Endothelial cell of umbilical vein (primary cell): ENCODE measurements at regions of chr3 and their contacts with region 1.

Region 1: GRCh38 chr3:142578327-142579223 is at the start of gene ATR:
- DNase-seq: peak; percentile 96
- H3K4me3 ChIP-seq: peak within 1 kb of the TSS; percentile 69 to 82 (median 81)
- H3K27ac ChIP-seq: peak within 1 kb of the TSS; percentile 81
- H3K4me1 ChIP-seq: peaks cover 15% of the 10 kb centered on the region
- H3K27me3 ChIP-seq: peaks cover 12 to 14% of the 10 kb centered on the region in 2 experiments
- CTCF ChIP-seq: no peak
- POLR2A ChIP-seq: peak; percentile 89
- total RNA-seq, gene ATR: 21.1 and 23.6 TPM in 2 replicates

Region 2: GRCh38 chr3:142337994-142338393 is 240.6 kb before region 1 on chr3:
- CTCF ChIA-PET with region 1: no interaction called
- POLR2A ChIA-PET with region 1: no interaction called
- dilution Hi-C with region 1: no loop called
- intact Hi-C with region 1: no loop called
- DNase-seq: no peak
- H3K4me3 ChIP-seq: no peak overlapping the region
- H3K27ac ChIP-seq: no peak overlapping the region
- H3K4me1 ChIP-seq: no peaks in the 10 kb centered on the region
- H3K27me3 ChIP-seq: no peaks in the 10 kb centered on the region
- CTCF ChIP-seq: no peak
- POLR2A ChIP-seq: no peak

Region 3: DNA sequence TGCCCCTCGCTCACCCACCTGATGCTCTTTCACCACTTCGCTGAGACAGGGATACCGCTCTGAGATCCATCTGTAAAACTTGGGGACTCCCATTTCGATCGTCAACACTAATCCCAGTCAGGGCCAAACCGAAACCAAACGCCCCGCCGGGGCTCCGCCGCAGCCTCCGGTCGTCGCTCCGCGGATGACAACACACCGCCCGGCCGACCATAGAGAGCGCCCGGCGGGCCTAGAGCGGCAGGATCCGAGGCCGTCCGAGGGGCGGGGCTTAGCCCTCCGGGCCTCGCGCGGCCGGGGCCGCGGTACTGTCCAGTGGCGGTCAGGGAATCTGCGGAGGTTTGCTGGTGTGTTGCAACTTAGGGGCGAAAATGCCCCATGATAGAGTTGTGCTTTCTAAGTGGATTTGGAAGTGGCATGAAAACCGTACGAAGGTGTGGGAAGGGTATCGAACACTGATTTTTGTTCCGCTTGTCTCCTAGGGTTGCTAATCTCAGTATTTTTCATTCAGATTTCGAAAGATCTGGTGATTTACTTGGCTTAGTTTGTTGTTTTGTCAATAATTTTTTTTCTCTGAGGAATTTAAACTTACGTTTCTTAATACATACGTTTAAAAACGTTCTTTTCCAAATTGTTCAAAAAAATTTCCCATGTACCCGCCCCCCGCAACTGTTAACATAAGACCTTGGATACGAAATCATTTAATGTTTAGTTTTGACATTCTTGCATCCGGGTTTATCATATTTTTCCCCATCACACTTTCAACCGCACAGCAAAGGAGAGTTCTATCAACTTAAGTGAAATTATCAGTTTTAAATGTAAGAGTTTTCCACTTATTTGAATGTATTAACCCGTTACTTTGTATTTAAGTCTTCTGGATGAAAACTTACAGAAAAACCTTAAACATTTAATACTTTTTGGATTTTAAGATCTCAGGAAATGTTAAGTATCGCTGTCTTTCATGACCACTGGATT is 130.4 kb before region 1 on chr3 and contains the start of gene XRN1:
- CTCF ChIA-PET with region 1: no interaction called
- POLR2A ChIA-PET with region 1: no interaction called
- dilution Hi-C with region 1: no loop called
- intact Hi-C with region 1: loop called (anchors 1 kb)
- DNase-seq: peak; percentile 93
- H3K4me3 ChIP-seq: peak within 1 kb of the TSS; percentile 44 to 98 (median 83)
- H3K27ac ChIP-seq: peak within 1 kb of the TSS; percentile 84
- H3K4me1 ChIP-seq: peaks cover 20% of the 10 kb centered on the region
- H3K27me3 ChIP-seq: no peaks in the 10 kb centered on the region
- CTCF ChIP-seq: no peak
- POLR2A ChIP-seq: peak; percentile 95
- total RNA-seq, gene XRN1: 34.4 and 40.0 TPM in 2 replicates

Region 4: GRCh38 chr3:142467768-142468167 is 110.8 kb before region 1 on chr3:
- CTCF ChIA-PET with region 1: no interaction called
- POLR2A ChIA-PET with region 1: no interaction called
- dilution Hi-C with region 1: no loop called
- intact Hi-C with region 1: no loop called
- DNase-seq: no peak
- H3K4me3 ChIP-seq: no peak overlapping the region
- H3K27ac ChIP-seq: no peak overlapping the region
- H3K4me1 ChIP-seq: no peaks in the 10 kb centered on the region
- H3K27me3 ChIP-seq: no peaks in the 10 kb centered on the region
- CTCF ChIP-seq: no peak
- POLR2A ChIP-seq: no peak

Region 5: DNA sequence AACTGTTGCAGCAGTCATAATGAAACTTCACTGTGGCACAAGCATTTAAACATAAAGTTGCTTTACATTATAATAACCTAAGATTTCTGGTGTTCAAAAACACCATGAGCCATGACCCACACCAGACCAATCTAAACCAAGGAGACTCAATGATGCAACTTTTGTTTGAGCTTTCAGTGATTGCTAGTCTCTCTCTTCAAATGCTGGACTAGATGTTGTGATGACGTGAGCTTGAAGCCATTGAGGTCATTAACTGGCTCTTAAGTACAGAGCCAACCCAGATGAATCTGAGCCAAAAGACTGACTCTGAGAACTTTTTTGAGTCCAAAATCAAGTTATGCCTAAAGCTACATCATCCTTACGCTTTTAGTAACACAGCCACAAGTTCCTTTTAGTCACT is 36.5 kb before region 1 on chr3:
- CTCF ChIA-PET with region 1: no interaction called
- POLR2A ChIA-PET with region 1: no interaction called
- dilution Hi-C with region 1: no loop called
- intact Hi-C with region 1: no loop called
- DNase-seq: no peak
- H3K4me3 ChIP-seq: no peak overlapping the region
- H3K27ac ChIP-seq: no peak overlapping the region
- H3K4me1 ChIP-seq: no peaks in the 10 kb centered on the region
- H3K27me3 ChIP-seq: no peaks in the 10 kb centered on the region
- CTCF ChIP-seq: no peak
- POLR2A ChIP-seq: no peak

Region 6: DNA sequence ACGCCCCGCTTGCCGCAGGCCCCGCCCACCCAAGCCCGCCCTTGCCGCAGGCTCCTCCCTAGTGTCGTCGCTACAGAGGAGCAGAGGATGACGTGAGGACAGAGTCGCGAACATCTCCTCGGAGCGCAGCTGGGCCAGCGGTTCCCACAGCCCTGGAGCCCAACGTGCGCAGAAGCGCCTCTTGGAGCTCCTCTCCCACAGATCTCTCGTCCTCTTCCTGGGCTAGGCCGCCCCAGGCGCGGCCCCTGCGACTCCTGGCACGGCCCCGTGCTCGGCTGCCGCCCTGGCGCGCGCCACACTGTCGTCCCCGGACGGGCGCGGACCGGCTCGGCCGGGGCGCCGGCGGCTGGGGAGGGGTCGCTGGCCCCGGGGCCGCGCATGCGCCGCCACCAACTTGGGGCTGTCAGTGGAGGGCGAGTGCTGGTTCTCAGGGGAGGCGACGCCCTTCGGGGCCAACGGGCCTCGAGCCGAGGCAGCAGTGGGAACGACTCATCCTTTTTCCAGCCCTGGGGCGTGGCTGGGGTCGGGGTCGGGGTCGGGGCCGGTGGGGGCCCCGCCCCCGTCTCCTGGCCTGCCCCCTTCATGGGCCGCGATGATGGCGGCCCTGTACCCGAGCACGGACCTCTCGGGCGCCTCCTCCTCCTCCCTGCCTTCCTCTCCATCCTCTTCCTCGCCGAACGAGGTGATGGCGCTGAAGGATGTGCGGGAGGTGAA is 145.6 kb after region 1 on chr3 and contains the start of gene TRPC1:
- CTCF ChIA-PET with region 1: no interaction called
- POLR2A ChIA-PET with region 1: no interaction called
- dilution Hi-C with region 1: no loop called
- intact Hi-C with region 1: loop called (anchors 2 kb)
- DNase-seq: peak; percentile 80
- H3K4me3 ChIP-seq: peak within 1 kb of the TSS; percentile 25 to 79 (median 68)
- H3K27ac ChIP-seq: peak within 1 kb of the TSS; percentile 72
- H3K4me1 ChIP-seq: peaks cover 7% of the 10 kb centered on the region
- H3K27me3 ChIP-seq: no peaks in the 10 kb centered on the region
- CTCF ChIP-seq: no peak
- POLR2A ChIP-seq: peak; percentile 69
- total RNA-seq, gene TRPC1: 5.6 and 5.9 TPM in 2 replicates